ENCODE measurements at regions of chr1 and their contacts with region 1.

Region 1: DNA sequence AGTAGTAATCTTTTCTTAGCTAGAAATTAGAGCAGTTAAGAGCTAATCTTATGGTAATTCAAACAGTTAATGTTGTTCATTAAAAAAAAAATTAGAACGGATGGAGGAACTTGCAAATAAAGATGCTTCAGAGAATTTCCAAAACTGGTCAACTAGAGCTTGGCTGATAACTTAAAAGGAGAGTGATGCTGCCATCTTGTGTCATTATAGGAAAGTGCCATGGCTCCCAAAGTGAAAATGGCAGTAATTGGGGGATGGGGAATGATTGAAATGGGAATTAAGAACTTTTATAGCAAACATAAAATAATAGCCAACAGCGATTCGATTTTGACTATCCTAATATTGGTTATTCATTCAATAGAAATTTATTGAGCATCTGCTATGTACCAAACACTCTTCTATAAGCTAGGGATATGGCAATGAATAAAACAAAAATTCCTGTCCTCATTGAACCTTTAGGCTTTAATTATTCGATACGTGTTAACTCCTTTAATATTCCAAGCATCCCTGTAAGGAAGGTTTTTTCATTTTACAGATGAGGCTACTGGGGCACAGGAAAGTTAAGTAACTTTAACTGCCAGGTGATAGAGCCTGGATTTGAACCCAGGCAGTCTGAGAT is 5.7 kb upstream of the PLPP3 start:
- DNase-seq: no peak
- ATAC-seq: peak in 3 of 4 donors; percentile 54 to 78 (median 68)
- H3K4me3 ChIP-seq: no peak overlapping the region
- H3K27ac ChIP-seq: no peak overlapping the region
- H3K4me1 ChIP-seq: peaks cover 0 to 9% (median 3%) of the 10 kb centered on the region in 12 donors
- H3K27me3 ChIP-seq: no peaks in the 10 kb centered on the region
- CTCF ChIP-seq: peak; percentile 76 to 91 (median 86)
- POLR2A ChIP-seq: no peak

Region 2: GRCh38 chr1:55131801-55132200 is 1453.2 kb before region 1 on chr1:
- intact Hi-C with region 1: loop called in 2 of 10 experiments (anchors 10 kb)
- DNase-seq: no peak
- ATAC-seq: no peak
- H3K4me3 ChIP-seq: no peak overlapping the region
- H3K27ac ChIP-seq: no peak overlapping the region
- H3K4me1 ChIP-seq: peaks cover 0 to 18% (median 0%) of the 10 kb centered on the region in 12 donors
- H3K27me3 ChIP-seq: no peaks in the 10 kb centered on the region
- CTCF ChIP-seq: no peak
- POLR2A ChIP-seq: no peak

Region 3: GRCh38 chr1:55155514-55155913 is 1429.5 kb before region 1 on chr1:
- intact Hi-C with region 1: loop called in 3 of 10 experiments (anchors 10 kb)
- DNase-seq: peak; percentile 60 to 81 (median 71)
- ATAC-seq: peak; percentile 75 to 94 (median 91)
- H3K4me3 ChIP-seq: no peak overlapping the region
- H3K27ac ChIP-seq: no peak overlapping the region
- H3K4me1 ChIP-seq: peaks cover 0 to 24% (median 0%) of the 10 kb centered on the region in 12 donors
- H3K27me3 ChIP-seq: no peaks in the 10 kb centered on the region
- CTCF ChIP-seq: no peak
- POLR2A ChIP-seq: no peak

Region 4: DNA sequence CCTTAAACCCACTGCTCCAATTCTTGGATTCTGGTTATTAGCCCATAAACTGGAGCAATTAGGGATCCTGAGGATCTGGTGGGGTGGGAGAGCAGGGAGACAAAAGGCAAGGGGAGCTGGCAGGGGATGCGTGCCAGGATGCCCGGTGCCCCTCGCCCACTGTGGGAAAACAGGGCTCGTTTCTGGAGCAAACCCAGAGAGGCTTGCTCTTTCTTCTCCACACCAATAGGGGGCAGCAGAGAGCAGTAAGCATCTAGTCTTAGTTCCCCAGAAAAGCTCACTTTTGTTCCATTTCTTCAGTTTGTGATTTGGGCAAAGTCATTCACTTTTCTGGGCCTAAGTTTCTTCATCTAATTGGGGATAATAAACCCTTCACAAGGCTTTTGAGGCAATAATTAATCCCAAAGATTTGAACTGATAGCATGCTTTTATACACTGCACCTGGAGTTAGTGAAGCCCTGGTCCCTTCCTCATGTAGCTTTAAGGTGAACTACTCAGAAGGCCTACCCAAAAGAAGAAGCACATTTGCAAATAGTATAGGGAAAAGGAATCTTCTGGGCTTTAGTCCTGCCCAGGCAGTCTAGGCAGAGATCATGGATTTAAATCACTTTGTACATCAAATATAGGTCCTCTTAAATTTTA is 1209.3 kb before region 1 on chr1:
- intact Hi-C with region 1: loop called in 9 of 10 experiments (anchors 2 to 5 kb)
- DNase-seq: peak in 2 of 5 donors; percentile 36 to 60
- ATAC-seq: peak in 1 of 4 donors; percentile 50
- H3K4me3 ChIP-seq: no peak overlapping the region
- H3K27ac ChIP-seq: peak overlapping the region in 1 of 12 donors; percentile 0
- H3K4me1 ChIP-seq: peaks cover 0 to 10% (median 0%) of the 10 kb centered on the region in 12 donors
- H3K27me3 ChIP-seq: no peaks in the 10 kb centered on the region
- CTCF ChIP-seq: peak; percentile 86 to 97 (median 92)
- POLR2A ChIP-seq: no peak

Region 5: DNA sequence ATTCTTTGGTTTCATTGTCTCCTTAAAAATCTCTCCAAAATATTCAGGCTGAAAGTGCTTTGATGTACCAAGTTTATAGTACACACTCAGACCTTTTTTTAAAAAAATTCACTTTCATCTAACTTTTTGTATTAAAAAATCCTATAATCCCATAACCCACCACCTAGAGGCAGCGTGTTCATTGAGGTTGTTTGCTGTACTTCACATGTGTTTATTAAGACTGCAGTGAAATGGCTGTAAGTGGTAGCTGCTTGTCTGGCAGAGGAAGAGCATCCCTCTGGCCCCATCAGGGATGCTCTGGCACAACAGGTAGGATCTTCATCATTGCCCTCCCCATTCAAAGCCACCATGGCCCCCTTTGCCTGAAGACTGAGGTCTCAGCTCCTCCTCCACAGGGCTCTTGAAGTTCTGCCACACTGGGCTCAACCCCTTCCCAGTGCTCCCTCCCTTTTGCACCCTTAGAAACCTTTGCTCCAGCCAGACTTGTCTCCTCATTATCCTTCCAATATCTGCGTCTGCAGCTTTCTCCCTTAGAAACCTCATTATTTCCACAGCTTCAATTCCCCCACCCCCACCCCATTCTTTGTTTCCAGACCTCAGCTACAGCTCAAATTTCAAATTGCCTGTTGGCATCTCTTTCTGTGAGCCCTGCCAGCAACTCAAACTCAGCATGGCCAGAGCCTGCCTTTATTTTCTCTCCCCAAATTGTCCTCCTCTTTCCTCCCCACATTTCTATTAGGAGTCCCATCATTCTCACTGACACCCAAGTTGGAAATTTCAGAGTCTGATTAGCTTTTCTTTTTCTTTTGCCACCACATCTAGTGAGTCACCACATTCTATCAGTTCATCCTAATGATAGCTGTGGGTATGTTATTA is 1000.3 kb before region 1 on chr1:
- intact Hi-C with region 1: loop called in 1 of 10 experiments (anchors 10 kb)
- DNase-seq: no peak
- ATAC-seq: peak in 2 of 4 donors; percentile 24 to 54
- H3K4me3 ChIP-seq: no peak overlapping the region
- H3K27ac ChIP-seq: no peak overlapping the region
- H3K4me1 ChIP-seq: peaks cover 0 to 31% (median 1%) of the 10 kb centered on the region in 12 donors
- H3K27me3 ChIP-seq: no peaks in the 10 kb centered on the region
- CTCF ChIP-seq: no peak
- POLR2A ChIP-seq: no peak

Region 6: DNA sequence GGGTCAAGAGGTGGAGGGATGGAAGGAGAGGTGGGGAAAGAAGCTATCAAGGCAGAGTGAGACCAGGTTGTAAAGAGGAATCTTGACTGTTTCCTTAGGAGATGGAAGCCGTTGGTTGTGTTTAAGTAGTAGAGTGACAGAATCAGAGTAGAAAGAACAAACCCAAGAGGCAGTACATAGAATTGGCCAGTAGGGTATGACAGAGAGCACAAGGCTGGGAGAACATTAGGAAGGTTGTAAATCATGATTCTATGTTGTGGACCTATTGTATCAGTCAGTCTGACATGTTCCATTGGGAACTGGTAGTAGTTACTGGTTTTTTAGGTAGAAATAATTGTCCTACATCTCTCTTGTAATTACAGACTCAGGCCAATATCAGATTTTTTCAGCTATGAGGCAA is 883.0 kb before region 1 on chr1:
- intact Hi-C with region 1: loop called in 1 of 10 experiments (anchors 10 kb)
- DNase-seq: no peak
- ATAC-seq: peak in 1 of 4 donors; percentile 51
- H3K4me3 ChIP-seq: no peak overlapping the region
- H3K27ac ChIP-seq: no peak overlapping the region
- H3K4me1 ChIP-seq: peaks cover 0 to 5% (median 0%) of the 10 kb centered on the region in 12 donors
- H3K27me3 ChIP-seq: no peaks in the 10 kb centered on the region
- CTCF ChIP-seq: peak; percentile 35 to 73 (median 60)
- POLR2A ChIP-seq: no peak

Region 7: DNA sequence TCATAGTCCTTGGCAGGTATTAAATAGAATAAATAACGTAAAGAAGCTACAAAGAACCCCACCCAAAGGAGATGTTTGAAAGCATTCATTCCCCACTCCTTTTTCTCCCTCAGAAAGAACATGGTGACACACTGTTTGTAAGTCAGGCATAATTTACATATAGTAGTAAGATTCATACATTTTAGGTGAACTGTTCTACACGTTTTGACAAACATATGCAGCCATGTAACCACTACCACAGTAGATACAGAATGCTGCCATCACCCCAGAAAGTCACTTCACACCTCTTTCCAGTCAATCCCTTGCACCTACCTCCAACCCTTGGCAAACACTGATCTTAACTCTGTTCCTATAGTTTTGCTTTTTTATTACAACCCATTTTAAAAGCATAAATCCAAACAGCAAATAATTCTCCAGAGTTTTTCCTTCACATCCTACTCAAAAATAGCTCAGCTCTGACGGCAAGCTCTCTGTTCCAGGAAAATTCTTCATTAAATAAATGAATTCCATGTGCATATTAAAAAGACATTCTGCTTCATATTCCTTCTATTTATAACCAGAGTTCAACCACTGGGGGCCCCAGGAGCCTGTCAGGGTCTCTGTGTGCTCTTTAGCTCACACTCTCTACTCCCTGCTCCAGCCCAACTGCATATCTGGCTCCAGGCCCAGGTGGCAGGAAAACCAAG is 264.4 kb before region 1 on chr1:
- intact Hi-C with region 1: no loop called
- DNase-seq: peak in 1 of 5 donors; percentile 31
- ATAC-seq: peak in 2 of 4 donors; percentile 46 to 54
- H3K4me3 ChIP-seq: peak overlapping the region in 1 of 12 donors; percentile 1
- H3K27ac ChIP-seq: peak overlapping the region in 2 of 12 donors; percentile 15 to 38
- H3K4me1 ChIP-seq: peaks cover 0 to 17% (median 13%) of the 10 kb centered on the region in 12 donors
- H3K27me3 ChIP-seq: no peaks in the 10 kb centered on the region
- CTCF ChIP-seq: no peak
- POLR2A ChIP-seq: no peak

Region 8: DNA sequence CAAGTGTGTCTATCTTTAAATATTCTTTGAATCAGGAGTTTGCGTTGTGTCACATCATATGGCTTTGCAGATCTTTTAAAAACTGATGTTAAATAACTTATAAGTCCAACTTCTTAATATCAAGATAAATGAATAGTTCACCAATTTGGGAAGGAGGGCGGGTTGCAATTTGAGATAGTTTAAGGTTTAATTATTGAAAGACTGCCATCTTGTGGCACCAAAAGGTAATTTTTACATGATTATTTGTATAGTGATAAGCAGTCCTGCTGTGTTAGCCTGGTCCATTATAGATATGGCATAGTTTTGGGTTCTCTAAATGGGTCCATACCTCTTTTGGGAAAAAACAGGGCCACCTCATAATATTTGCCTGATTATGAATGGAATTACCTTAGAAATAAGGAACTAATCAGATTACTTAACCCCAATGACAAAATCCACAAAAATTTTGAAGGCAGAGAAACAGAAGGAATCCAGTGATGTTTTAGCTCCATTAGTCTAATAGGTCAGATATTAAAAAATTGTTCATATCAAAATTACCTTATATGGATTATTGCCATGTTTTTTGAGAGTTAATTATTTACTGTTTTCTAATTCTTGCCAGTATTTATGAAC is 124.4 kb after region 1 on chr1:
- intact Hi-C with region 1: loop called in 2 of 10 experiments (anchors 5 to 10 kb)
- DNase-seq: no peak
- ATAC-seq: peak in 3 of 4 donors; percentile 53 to 77 (median 58)
- H3K4me3 ChIP-seq: no peak overlapping the region
- H3K27ac ChIP-seq: no peak overlapping the region
- H3K4me1 ChIP-seq: peaks cover 0 to 18% (median 0%) of the 10 kb centered on the region in 12 donors
- H3K27me3 ChIP-seq: no peaks in the 10 kb centered on the region
- CTCF ChIP-seq: peak; percentile 40 to 72 (median 62)
- POLR2A ChIP-seq: no peak

Measured in heart left ventricle (tissue), 16 donors.